Activated B cell treated with CpG ODN at 0.5 μM for 24 hours (primary cell): ENCODE measurements at regions of chr1 and their contacts with region 1.

Region 1: DNA sequence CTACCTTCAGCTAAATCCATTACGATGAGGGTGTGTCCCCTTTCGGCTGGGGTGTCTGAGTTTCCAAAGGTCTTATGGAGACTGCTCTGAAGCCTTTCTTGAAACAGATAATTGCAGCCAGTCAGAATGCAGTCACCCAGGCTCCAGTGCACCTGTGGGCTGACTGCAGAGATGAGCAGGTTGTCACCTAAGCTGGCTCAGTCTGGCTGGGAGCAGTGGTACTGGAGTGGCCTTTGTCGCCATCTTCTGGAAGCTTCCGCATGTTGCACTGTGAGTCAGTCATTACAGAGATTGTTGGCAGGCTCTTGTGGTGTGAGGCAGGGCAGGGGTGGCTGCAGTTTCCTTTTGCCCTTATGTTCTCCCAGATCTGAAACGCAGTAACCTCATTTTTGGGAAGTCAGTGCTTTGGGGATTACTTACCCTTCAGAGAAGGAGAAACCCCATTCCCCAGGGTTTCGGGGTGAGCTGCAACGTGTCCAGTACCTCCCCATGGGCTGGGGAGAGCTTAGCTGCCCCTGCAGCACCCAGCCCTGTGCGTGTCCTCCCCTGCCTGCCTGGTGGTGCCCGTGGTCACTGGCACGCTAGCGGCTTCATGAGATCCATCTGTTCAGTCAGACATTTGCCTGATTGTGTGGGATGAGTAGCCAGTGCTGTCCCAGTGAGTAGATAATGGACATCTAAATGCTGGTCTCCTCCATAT is 48.0 kb downstream of the SMYD2 start:
- DNase-seq: peak; percentile 53
- ATAC-seq: peak; percentile 95
- H3K4me3 Mint-ChIP-seq: no peak overlapping the region
- H3K27ac Mint-ChIP-seq: no peak overlapping the region
- H3K4me1 Mint-ChIP-seq: peaks cover 14% of the 10 kb centered on the region
- H3K27me3 Mint-ChIP-seq: no peaks in the 10 kb centered on the region
- CTCF ChIP-seq: peak; percentile 39

Region 2: DNA sequence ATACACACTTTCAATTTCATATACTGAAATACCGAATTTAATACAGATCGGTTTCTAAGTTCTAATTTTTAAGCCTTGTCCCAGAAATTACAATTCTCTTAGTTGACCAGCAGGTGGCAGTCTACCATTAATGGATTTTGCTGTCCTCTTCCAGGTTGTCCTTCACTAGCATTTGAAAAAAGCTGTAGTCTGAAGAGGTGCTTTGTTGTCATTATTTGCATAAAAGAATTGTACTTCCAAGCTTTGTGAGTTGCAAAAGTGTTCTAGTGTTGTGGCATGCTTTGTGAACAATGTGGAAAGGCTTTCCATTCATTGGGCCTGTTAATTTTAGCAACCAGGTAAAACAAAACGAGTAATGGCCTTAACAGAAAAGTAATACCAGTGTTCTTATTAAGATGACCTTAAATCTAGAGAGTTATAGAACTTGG is 1084.2 kb before region 1 on chr1:
- CTCF ChIA-PET with region 1: no interaction called
- POLR2A ChIA-PET with region 1: no interaction called
- intact Hi-C with region 1: loop called (anchors 1 kb)
- DNase-seq: no peak
- ATAC-seq: no peak
- H3K4me3 Mint-ChIP-seq: no peak overlapping the region
- H3K27ac Mint-ChIP-seq: no peak overlapping the region
- H3K4me1 Mint-ChIP-seq: no peaks in the 10 kb centered on the region
- H3K27me3 Mint-ChIP-seq: no peaks in the 10 kb centered on the region
- CTCF ChIP-seq: peak; percentile 81

Region 3: GRCh38 chr1:214213136-214213535 is 115.8 kb before region 1 on chr1:
- CTCF ChIA-PET with region 1: interaction called, 32 read pairs
- POLR2A ChIA-PET with region 1: no interaction called
- intact Hi-C with region 1: loop called (anchors 1 kb)
- DNase-seq: no peak
- ATAC-seq: no peak
- H3K4me3 Mint-ChIP-seq: no peak overlapping the region
- H3K27ac Mint-ChIP-seq: no peak overlapping the region
- H3K4me1 Mint-ChIP-seq: peaks cover 3% of the 10 kb centered on the region
- H3K27me3 Mint-ChIP-seq: peaks cover 4% of the 10 kb centered on the region
- CTCF ChIP-seq: no peak

Region 4: DNA sequence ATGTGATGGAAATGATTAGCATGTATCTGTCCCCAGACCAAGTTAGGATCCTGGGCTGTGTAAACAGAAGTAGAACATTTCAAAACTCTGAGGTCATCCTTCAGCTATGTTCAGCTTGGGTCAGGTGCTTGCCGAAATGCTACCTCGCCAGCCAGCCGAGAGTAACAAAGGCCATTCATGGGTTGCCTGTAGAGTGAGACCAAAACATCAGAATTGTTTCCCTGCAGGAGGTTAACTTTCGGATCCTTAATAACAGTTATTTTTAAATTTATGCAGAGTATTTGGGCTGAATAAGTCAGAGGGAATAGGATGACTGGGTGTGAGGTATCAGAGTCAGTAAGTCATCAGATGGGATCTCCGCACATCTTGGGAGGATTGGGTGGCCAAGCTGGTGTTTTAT is 12.3 kb before region 1 on chr1:
- CTCF ChIA-PET with region 1: interaction called, 51 read pairs
- POLR2A ChIA-PET with region 1: no interaction called
- intact Hi-C with region 1: no loop called
- DNase-seq: no peak
- ATAC-seq: no peak
- H3K4me3 Mint-ChIP-seq: no peak overlapping the region
- H3K27ac Mint-ChIP-seq: no peak overlapping the region
- H3K4me1 Mint-ChIP-seq: peaks cover 1% of the 10 kb centered on the region
- H3K27me3 Mint-ChIP-seq: no peaks in the 10 kb centered on the region
- CTCF ChIP-seq: no peak

Region 5: DNA sequence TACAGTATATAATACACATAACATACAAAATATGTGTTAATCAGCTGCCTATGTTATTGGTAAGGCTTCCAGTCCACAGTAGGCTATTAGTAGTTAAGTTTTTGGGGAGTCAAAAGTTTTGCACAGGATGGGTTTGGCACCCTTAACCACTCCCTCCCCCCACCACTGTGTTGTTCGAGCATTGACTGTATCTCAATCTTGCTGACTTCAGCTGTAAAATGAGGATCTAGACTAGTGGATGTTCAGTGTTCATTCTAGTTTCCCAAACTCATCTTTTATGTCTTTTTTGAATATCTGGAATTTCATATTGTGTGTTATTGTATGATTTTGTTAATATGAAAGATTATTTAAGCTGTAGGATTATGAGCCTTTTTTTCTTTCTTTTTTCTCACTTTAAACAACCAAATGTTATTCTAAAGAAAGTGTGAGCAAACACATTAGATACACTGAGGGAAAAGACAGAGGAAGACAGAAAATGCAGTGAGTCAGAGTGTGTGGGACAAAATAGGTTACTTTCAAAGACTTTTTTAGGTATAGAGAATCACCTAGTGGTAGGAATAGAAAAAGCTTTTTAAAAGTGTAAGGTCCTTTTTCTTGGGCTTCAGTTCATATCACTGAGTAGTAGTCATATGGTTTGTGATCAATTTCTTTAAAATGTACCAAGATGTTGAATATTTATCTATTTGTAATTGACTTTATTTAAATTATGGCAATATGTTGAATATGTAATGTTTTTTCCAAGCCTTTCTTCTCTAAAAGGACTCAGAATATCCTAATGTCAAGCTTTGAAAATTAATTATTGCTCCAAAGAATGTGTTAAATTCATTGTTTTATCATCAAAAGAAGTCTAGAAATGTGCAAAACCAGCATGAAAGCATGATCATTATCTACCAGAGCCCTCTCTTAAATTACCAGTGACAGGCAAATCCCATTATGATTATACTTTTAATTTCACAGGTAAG is 256.2 kb after region 1 on chr1:
- CTCF ChIA-PET with region 1: interaction called, 23 read pairs
- POLR2A ChIA-PET with region 1: no interaction called
- intact Hi-C with region 1: loop called (anchors 2 kb)
- DNase-seq: no peak
- ATAC-seq: no peak
- H3K4me3 Mint-ChIP-seq: no peak overlapping the region
- H3K27ac Mint-ChIP-seq: no peak overlapping the region
- H3K4me1 Mint-ChIP-seq: no peaks in the 10 kb centered on the region
- H3K27me3 Mint-ChIP-seq: peaks cover 11% of the 10 kb centered on the region
- CTCF ChIP-seq: no peak

Region 6: DNA sequence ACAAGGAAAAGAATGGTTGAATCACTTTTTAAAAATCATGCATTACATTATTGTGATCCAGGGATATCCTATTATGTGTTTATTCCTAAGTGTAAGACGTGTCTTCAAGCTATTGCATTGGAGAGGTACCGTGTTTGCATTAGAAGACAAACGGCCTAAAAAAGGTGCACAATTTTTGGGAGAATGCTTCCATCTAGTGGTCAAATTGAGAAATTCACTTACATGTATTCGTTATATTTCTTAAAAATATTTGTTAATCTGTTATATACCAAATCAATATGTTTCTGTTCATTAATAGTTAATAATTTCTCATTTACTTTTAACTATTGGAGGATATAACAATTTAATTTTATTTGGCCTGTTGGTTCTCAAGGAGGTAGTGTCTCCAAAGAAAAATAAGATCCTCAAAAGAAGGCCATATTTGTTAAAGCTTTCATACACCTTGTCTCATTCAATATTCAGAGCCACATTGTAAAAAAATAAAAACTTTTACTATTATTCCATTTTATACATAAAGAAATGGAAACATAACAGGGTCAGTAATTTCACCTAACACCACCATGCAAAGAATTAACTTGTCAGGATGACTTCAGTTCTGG is 1197.7 kb after region 1 on chr1:
- CTCF ChIA-PET with region 1: no interaction called
- POLR2A ChIA-PET with region 1: no interaction called
- intact Hi-C with region 1: loop called (anchors 1 kb)
- DNase-seq: no peak
- ATAC-seq: no peak
- H3K4me3 Mint-ChIP-seq: no peak overlapping the region
- H3K27ac Mint-ChIP-seq: no peak overlapping the region
- H3K4me1 Mint-ChIP-seq: no peaks in the 10 kb centered on the region
- H3K27me3 Mint-ChIP-seq: peaks cover 1% of the 10 kb centered on the region
- CTCF ChIP-seq: peak; percentile 49